ENCODE measurements at regions of chr10 and their contacts with region 1.

Region 1: DNA sequence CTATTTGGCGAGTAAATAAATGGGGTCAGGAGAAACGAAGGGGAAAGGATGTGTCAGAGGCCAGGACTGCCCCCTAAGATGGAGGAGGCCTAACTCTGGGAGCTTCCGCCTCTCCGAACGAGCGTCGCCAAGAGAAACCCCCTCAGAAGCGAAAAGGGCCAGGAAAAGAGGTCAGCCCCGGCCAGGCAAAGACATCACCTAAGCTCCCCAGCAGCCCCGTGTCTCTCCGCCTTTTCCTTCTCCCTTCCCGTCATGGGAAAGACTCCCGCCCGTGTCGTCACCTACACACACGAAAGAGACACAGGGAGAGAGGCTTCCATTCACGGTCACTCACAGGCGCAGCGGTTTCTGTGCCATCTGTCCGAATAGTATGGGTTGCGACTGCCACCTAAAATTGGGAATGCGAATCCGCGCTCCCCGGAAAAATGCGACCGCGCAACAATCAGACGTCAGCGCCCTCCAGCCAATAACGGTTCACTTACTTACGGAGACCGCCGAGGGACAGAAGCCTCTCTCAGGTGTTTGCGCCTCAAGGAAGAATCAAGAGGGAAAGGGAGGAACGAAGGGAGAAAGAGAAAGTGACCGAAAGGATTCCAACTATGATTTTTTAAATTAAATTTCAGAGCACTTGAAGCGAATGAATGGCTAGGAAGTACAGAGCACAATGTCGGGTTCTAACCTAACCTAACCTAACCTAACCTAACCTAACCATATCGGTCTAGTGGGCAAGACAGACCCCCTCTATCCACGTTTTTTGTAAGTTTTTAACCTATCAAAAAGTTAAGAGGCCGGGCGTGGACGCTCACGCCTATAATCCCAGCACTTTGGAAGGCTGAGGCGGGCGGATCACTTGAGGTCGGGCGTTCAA is at the start of gene CWF19L1:
- DNase-seq: peak; percentile 88 to 92
- ATAC-seq: peak; percentile 93 to 98 (median 97)
- H3K4me3 ChIP-seq: peak within 1 kb of the TSS; percentile 95
- H3K27ac ChIP-seq: peak within 1 kb of the TSS; percentile 84
- H3K4me1 ChIP-seq: peaks cover 11% of the 10 kb centered on the region
- H3K27me3 ChIP-seq: no peaks in the 10 kb centered on the region
- CTCF ChIP-seq: no peak
- total RNA-seq, gene CWF19L1: 9.5 to 16.0 (median 12.7) TPM

Region 2: DNA sequence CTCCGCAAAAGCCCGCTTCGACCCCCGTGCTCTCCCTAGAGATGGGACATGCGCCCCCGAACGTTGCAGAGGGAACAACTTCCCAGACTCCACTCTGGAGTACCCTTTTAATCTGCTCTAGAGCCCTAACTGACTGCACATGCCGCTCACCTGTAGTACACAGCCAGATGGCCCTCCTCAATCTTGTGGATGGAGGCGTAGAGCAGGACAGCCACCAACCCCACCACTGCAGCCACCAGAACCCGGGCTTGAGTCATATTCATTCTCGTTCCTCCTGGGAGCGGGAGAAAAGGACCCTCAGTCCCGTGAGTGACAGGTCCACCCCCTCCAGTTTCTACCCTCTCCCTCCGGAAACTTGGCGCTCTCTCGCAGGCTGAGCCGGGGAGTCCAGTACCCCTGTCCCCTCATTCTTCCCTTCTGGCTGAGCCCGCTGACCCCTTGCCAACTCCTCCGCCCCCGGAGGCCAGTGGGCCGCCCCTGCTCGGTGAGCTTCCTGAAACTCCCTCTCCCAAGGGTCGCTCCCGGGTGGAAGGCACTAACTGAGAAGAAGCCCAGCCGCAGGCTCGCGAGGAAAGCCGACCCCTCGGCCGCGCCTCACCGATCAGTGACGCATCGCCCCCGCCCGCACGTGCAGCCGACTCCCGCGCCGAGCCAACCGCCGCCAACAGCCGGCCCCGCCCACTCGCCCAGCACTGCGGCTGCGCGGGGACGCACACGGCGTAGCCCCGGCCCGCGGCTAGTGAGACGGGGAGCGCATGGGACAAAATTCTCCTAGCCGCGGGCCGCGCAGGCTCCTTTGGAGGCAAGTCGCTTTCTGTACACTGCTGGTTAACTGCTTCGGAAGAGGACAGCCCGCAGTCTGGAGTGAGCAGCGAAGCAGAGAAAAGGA is 81.9 kb before region 1 on chr10 and contains the start of gene ERLIN1:
- intact Hi-C with region 1: loop called in 1 of 2 experiments (anchors 5 kb)
- DNase-seq: peak; percentile 94 to 97
- ATAC-seq: peak; percentile 98 to 99 (median 98)
- H3K4me3 ChIP-seq: peak within 1 kb of the TSS; percentile 93
- H3K27ac ChIP-seq: peak within 1 kb of the TSS; percentile 93
- H3K4me1 ChIP-seq: peaks cover 26% of the 10 kb centered on the region
- H3K27me3 ChIP-seq: no peaks in the 10 kb centered on the region
- CTCF ChIP-seq: no peak
- total RNA-seq, gene ERLIN1: 8.3 to 11.6 (median 10.0) TPM

Measured in psoas muscle (tissue), 8 donors.